Endothelial cell of umbilical vein (primary cell): ENCODE measurements at regions of chr15 and their contacts with region 1.

Region 1: DNA sequence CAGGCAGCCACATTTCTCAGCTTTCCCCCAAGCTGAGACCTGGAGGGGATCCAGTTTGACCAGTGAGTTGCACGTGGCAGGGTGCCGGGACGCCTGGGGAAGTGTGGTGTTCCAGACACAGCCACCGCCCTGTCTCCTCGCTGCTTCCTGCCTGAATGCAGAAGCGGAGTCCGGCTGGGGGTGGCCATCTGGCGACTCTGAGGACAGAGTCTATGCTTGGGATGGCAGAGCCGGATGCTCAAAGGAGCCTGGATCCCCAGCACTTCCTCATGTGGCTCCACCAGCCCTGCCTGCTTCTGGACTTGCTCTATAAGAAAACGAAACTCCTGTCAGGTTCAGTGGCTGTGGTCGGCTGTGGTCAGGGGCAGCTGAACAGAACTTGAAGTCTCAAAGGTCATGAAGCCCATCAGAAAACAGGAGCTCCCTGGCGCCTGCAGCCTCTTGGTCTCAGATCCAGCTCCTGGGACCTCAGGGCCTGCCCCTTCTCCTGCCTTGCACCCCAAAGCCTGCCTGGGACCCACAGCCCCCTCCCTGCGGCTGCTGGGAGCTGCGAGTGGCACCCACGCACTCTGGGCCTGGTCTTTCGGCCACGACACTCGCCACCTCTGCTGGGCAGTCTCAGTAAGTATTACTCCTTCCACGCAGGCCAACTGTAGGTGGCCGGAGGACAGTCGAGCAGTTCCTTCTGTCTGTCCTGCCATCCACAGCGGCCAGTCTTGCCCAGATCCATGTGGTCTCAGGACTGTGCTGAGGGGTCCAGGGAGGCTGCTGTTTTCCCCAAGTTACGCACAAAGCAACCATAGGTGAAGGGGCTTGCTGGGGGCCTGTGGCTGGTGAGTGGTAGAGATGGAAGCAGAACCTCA is 112.8 kb upstream of the MEF2A start:
- DNase-seq: peak; percentile 67
- H3K4me3 ChIP-seq: no peak overlapping the region
- H3K27ac ChIP-seq: peak overlapping the region; percentile 97
- H3K4me1 ChIP-seq: peaks cover 56% of the 10 kb centered on the region
- H3K27me3 ChIP-seq: no peaks in the 10 kb centered on the region
- CTCF ChIP-seq: no peak
- POLR2A ChIP-seq: peak; percentile 14

Region 2: DNA sequence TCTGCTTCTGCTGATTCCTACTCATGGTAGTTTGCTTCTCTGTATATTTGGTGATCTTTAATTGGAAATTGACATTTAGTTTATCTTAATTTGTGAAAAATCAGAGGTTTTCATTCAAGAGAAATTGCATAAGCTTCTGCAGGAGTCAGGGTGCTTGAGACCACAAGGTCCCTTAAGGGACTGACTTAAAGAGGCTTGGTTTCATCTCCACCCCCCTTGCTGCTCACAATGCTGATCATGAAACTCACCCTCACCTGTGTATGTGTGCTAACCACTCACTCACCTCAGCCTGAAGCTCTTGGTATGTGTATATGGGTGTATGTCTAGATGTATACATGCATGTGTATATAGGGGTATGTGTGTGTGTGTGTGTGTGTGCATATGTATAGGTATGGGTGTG is 456.8 kb before region 1 on chr15:
- CTCF ChIA-PET with region 1: no interaction called
- POLR2A ChIA-PET with region 1: no interaction called
- dilution Hi-C with region 1: no loop called
- intact Hi-C with region 1: no loop called
- DNase-seq: no peak
- H3K4me3 ChIP-seq: no peak overlapping the region
- H3K27ac ChIP-seq: no peak overlapping the region
- H3K4me1 ChIP-seq: no peaks in the 10 kb centered on the region
- H3K27me3 ChIP-seq: no peaks in the 10 kb centered on the region
- CTCF ChIP-seq: no peak
- POLR2A ChIP-seq: no peak

Region 3: DNA sequence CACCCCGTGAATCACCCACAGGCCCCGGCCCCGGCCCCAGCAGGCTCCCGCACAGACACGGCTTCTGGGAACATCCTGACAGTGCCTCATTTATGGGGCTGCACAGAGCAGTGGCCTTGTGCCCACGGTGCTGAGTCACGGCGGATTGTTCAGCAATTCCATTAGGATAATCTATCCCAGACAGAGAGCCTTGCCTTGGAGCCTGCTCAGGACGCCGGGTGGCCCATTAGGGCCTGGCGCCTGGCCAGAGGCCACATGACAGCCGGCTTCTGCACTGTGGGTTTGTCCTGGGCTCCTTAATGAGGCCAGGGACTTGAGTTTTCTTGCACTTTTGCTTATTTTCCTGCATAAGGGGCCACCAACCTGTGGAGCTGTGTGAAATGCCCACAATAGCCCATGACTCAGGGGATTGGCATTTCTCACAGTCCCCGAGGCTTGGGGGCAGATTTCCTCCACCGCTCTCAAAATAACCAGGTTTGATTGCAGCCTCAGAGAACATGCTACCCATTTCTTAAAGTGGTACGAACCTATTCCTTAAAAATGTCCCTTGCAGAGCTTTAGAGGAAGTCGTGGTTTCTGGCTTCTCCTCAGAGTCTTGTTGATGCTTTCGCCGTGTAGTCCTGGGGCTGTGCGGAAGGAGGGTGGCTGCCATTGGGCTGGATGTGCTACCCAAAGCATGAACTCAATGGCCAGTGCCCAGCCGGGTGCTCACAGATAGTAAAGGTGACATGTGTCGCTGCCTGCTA is 329.1 kb before region 1 on chr15:
- CTCF ChIA-PET with region 1: no interaction called
- POLR2A ChIA-PET with region 1: no interaction called
- dilution Hi-C with region 1: no loop called
- intact Hi-C with region 1: loop called (anchors 5 kb)
- DNase-seq: peak; percentile 95
- H3K4me3 ChIP-seq: no peak overlapping the region
- H3K27ac ChIP-seq: peak overlapping the region; percentile 88
- H3K4me1 ChIP-seq: peaks cover 30% of the 10 kb centered on the region
- H3K27me3 ChIP-seq: no peaks in the 10 kb centered on the region
- CTCF ChIP-seq: no peak
- POLR2A ChIP-seq: no peak

Region 4: DNA sequence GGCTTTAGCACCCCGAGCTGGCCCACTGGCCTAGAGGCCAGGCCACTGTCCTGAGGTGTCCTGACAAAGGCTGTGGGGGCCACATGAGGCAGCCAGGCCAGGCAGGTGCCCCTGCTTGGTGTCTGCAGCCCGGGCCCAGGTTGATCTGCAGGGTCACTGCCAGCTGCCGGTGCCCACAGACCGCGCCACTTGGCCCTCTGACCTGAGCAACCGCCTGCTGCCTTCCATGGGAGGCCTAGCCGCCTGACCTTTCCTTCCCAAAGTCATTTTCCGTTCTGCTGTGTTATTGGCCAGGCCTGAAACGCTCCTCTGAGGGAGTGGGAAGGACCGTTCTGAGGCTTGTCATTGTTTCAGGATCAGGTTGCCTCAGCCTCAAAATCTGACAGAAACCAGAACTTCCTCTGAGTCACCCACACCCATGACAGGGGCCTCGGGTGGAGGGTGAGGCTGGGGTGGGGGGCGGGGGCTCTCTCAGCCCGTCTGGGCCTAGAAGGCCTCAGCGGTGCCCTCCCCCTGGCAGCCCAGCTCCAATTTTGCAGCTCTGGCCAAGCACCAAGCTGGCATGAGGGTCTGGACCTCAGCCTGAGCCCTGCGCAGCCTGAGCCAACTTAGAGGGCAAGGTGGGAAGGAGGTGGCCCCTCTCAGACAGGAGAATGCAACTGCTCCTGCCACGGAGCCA is 27.9 kb before region 1 on chr15:
- CTCF ChIA-PET with region 1: interaction called, 5 read pairs
- POLR2A ChIA-PET with region 1: no interaction called
- dilution Hi-C with region 1: no loop called
- intact Hi-C with region 1: loop called (anchors 1 kb)
- DNase-seq: peak; percentile 88
- H3K4me3 ChIP-seq: no peak overlapping the region
- H3K27ac ChIP-seq: peak overlapping the region; percentile 88
- H3K4me1 ChIP-seq: peaks cover 19% of the 10 kb centered on the region
- H3K27me3 ChIP-seq: no peaks in the 10 kb centered on the region
- CTCF ChIP-seq: no peak
- POLR2A ChIP-seq: no peak

Region 5: DNA sequence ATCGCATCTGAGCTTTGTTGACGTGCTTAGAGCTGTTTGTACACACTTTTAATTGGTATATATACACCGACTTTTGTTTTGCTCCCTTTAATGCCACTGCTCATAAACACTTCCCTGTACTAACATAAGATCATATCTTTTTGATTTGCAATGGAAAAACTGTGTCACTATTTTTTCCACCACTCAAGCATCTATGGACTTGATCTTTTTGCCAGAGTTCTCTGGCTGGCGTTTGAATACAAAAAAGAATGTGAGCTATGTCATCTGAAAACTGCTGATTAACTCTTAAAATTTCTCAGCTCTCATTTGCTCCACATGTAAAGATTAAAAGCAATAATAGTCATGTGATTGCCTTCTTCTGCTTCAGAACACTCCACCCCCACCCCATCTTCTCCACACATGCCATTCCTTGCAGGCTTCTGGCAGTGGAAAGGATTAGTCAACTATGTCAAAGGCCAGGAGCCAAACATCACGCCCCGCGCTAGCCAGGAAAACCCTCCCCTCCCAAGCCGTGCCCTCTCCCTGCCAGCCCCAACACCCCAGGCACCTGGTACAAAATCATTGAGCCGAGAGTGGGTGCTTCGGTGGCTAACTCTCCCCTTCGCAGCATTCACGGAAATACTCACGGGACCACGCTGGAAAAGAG is 10.6 kb before region 1 on chr15:
- CTCF ChIA-PET with region 1: interaction called, 7 read pairs
- POLR2A ChIA-PET with region 1: no interaction called
- dilution Hi-C with region 1: no loop called
- intact Hi-C with region 1: loop called (anchors 1 kb)
- DNase-seq: peak; percentile 94
- H3K4me3 ChIP-seq: no peak overlapping the region
- H3K27ac ChIP-seq: peak overlapping the region; percentile 47
- H3K4me1 ChIP-seq: peaks cover 21% of the 10 kb centered on the region
- H3K27me3 ChIP-seq: no peaks in the 10 kb centered on the region
- CTCF ChIP-seq: no peak
- POLR2A ChIP-seq: no peak

Region 6: DNA sequence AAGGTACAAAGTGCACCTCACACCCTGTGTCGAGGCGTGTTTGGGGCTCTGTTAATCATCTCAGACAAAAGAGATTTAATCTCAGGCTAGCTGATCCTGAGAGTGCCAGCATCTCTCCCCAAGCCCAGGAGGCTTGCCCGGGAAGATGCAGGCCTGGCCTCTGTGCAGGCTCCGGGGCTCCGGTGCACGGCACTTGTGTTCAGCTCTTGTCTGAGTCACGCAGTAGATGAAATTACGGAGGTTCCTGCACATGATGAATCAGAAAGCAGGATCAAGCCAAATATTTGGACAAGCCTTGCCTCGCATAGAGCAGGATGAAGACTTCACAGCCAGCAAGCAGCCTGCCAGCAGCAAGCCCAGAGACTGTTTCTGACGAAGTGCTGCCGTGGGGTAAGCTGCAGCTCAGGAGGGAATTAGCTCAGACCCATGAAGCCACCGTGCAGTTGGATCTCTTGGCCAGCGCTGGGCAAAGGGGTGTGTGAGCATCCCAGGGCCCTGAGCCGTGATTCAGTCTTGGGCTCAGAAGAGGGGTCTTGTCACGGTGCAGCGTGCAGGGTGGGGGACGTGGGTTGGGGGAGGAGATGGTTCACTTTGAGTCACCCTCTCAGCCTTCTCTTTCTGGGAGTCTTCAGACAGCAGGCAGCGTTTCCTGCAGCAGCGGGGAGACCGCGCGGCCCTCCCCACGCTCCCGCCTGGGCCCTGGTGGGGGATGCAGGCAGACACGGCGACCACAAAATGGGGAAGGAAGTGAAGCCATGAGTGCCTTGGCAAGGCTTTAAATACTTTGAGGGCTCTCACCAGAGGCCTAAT is 23.6 kb after region 1 on chr15:
- CTCF ChIA-PET with region 1: interaction called, 6 read pairs
- POLR2A ChIA-PET with region 1: no interaction called
- dilution Hi-C with region 1: no loop called
- intact Hi-C with region 1: loop called (anchors 1 kb)
- DNase-seq: peak; percentile 84
- H3K4me3 ChIP-seq: no peak overlapping the region
- H3K27ac ChIP-seq: peak overlapping the region; percentile 36
- H3K4me1 ChIP-seq: peaks cover 17% of the 10 kb centered on the region
- H3K27me3 ChIP-seq: no peaks in the 10 kb centered on the region
- CTCF ChIP-seq: no peak
- POLR2A ChIP-seq: no peak

Region 7: GRCh38 chr15:99682455-99682854 is 229.4 kb after region 1 on chr15:
- CTCF ChIA-PET with region 1: no interaction called
- POLR2A ChIA-PET with region 1: no interaction called
- dilution Hi-C with region 1: no loop called
- intact Hi-C with region 1: loop called (anchors 2 kb)
- DNase-seq: peak; percentile 94
- H3K4me3 ChIP-seq: peak overlapping the region in 1 of 3 experiments; percentile 41
- H3K27ac ChIP-seq: peak overlapping the region; percentile 95
- H3K4me1 ChIP-seq: peaks cover 23% of the 10 kb centered on the region
- H3K27me3 ChIP-seq: no peaks in the 10 kb centered on the region
- CTCF ChIP-seq: no peak
- POLR2A ChIP-seq: no peak